Naive thymus-derived CD4-positive, alpha-beta T cell (primary cell): ENCODE measurements at regions of chr22 and their contacts with region 1.

Region 1: DNA sequence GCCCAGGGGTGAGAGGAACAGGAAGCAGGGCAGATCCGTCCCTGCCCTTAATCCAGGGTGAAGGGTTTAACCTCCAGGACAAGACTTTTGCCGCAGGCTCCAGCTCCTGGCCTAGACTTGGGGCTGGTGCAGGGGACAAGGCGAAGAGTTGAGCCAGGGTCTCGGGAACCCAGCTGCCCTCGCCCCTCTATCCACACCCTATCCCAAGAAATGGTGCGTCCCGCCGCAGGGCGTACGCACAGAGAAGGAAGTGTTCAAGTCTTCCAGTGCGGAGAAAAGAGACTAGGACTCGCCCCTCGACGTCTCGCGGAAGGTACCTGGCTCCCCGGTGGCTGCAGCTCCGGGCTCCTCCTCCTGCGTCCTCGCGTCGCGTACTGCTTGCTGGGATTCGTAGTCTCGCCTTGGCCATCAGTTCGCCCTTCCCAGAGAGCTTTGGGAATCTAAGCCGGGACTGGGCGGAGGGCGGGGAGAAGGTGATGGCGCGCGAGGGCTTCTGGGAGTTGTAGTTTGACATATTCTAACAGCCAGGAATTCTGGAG is at the start of gene ZMAT5:
- DNase-seq: peak; percentile 68 to 96 (median 93)
- ATAC-seq: peak; percentile 98
- H3K4me3 ChIP-seq: peak within 1 kb of the TSS; percentile 84
- H3K4me3 Mint-ChIP-seq: peak within 1 kb of the TSS; percentile 95 to 100 (median 99)
- H3K27ac ChIP-seq: peak within 1 kb of the TSS; percentile 88
- H3K27ac Mint-ChIP-seq: peak within 1 kb of the TSS; percentile 92 to 99 (median 97)
- H3K4me1 ChIP-seq: peaks cover 16 to 17% of the 10 kb centered on the region in 2 donors
- H3K4me1 Mint-ChIP-seq: peaks cover 21 to 59% (median 39%) of the 10 kb centered on the region in 7 donors
- H3K27me3 ChIP-seq: no peaks in the 10 kb centered on the region
- H3K27me3 Mint-ChIP-seq: no peaks in the 10 kb centered on the region
- total RNA-seq, gene ZMAT5: 12.9 to 26.4 (median 14.7) TPM

Region 2: GRCh38 chr22:27919222-27919941 is 1847.3 kb before region 1 on chr22 and contains the start of gene PITPNB:
- CTCF ChIA-PET with region 1: no interaction called
- POLR2A ChIA-PET with region 1: no interaction called
- intact Hi-C with region 1: loop called in 1 of 2 experiments (anchors 5 kb)
- DNase-seq: peak; percentile 97 to 100 (median 99)
- ATAC-seq: peak; percentile 95
- H3K4me3 ChIP-seq: peak within 1 kb of the TSS; percentile 84
- H3K4me3 Mint-ChIP-seq: peak within 1 kb of the TSS; percentile 97 to 100 (median 99)
- H3K27ac ChIP-seq: peak within 1 kb of the TSS; percentile 94
- H3K27ac Mint-ChIP-seq: peak within 1 kb of the TSS; percentile 93 to 99 (median 99)
- H3K4me1 ChIP-seq: peaks cover 29 to 32% of the 10 kb centered on the region in 2 donors
- H3K4me1 Mint-ChIP-seq: peaks cover 56 to 85% (median 75%) of the 10 kb centered on the region in 7 donors
- H3K27me3 ChIP-seq: no peaks in the 10 kb centered on the region
- H3K27me3 Mint-ChIP-seq: peaks cover 0 to 4% (median 0%) of the 10 kb centered on the region in 5 donors
- total RNA-seq, gene PITPNB: 56.3 to 98.8 (median 62.8) TPM

Region 3: DNA sequence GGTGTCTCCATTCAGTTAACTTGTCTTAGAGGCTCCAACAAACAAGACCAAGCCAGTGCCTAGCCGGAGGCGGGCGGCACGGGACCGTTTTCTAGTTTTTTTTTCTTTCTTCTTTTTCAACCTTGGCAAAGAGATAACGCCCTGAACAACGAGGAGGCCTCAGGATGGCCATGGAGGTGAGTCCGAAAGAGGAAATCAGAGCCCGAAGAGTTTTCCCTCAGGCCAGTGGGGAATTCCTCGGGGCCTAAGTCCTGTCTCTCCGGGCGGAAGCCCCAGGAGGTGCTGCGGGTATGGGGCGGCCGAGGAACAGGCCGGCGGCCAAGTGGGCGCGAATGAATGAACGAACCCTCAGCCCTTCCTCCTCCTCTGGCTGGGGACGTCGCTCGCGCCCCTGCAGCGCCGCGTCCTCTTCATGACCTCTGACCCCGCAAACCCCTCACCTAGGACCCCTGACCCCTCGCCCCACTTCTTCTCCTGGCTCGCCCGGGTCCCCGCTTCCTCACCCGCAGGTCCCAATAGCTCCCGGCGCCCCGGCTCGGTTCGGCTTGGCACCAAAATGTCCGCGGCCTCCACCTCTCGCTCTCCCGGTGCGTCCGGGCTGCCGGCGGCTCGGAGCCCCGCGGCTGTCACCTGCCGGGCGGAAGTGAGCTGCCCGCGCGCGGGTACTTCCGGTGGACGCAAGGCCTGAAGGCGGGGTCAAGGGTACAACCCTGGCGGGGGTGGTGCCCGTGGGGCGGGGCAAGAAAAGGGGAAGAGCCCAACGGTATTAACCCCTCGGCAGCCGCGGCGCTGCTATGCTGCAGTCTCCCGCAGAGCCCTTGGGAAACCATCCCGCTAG is 378.6 kb before region 1 on chr22 and contains the start of gene AP1B1:
- CTCF ChIA-PET with region 1: no interaction called
- POLR2A ChIA-PET with region 1: no interaction called
- intact Hi-C with region 1: loop called in 1 of 2 experiments (anchors 1 kb)
- DNase-seq: peak; percentile 79 to 96 (median 86)
- ATAC-seq: peak; percentile 98
- H3K4me3 ChIP-seq: peak within 1 kb of the TSS; percentile 87
- H3K4me3 Mint-ChIP-seq: peak within 1 kb of the TSS; percentile 91 to 96 (median 94)
- H3K27ac ChIP-seq: peak within 1 kb of the TSS; percentile 73
- H3K27ac Mint-ChIP-seq: peak within 1 kb of the TSS; percentile 87 to 97 (median 90)
- H3K4me1 ChIP-seq: peaks cover 7 to 13% of the 10 kb centered on the region in 2 donors
- H3K4me1 Mint-ChIP-seq: peaks cover 31 to 51% (median 48%) of the 10 kb centered on the region in 7 donors
- H3K27me3 ChIP-seq: no peaks in the 10 kb centered on the region
- H3K27me3 Mint-ChIP-seq: no peaks in the 10 kb centered on the region
- total RNA-seq, gene AP1B1: 38.5 to 77.7 (median 45.8) TPM

Region 4: GRCh38 chr22:29580200-29580810 is 186.4 kb before region 1 on chr22:
- CTCF ChIA-PET with region 1: no interaction called
- POLR2A ChIA-PET with region 1: no interaction called
- intact Hi-C with region 1: loop called in 1 of 2 experiments (anchors 1 kb)
- DNase-seq: peak in 1 of 9 donors; percentile 26
- ATAC-seq: no peak
- H3K4me3 ChIP-seq: peak overlapping the region; percentile 75
- H3K4me3 Mint-ChIP-seq: peak overlapping the region; percentile 88 to 96 (median 93)
- H3K27ac ChIP-seq: peak overlapping the region; percentile 69
- H3K27ac Mint-ChIP-seq: peak overlapping the region; percentile 78 to 95 (median 91)
- H3K4me1 ChIP-seq: peaks cover 0 to 10% of the 10 kb centered on the region in 2 donors
- H3K4me1 Mint-ChIP-seq: peaks cover 11 to 20% (median 16%) of the 10 kb centered on the region in 7 donors
- H3K27me3 ChIP-seq: no peaks in the 10 kb centered on the region
- H3K27me3 Mint-ChIP-seq: no peaks in the 10 kb centered on the region

Region 5: GRCh38 chr22:29883045-29883774 is 116.5 kb after region 1 on chr22 and contains the start of gene MTMR3:
- CTCF ChIA-PET with region 1: no interaction called
- POLR2A ChIA-PET with region 1: no interaction called
- intact Hi-C with region 1: loop called (anchors 1 kb)
- DNase-seq: peak; percentile 71 to 99 (median 82)
- ATAC-seq: peak; percentile 91
- H3K4me3 ChIP-seq: peak within 1 kb of the TSS; percentile 69
- H3K4me3 Mint-ChIP-seq: peak within 1 kb of the TSS in 7 of 10 donors; percentile 72 to 95 (median 92)
- H3K27ac ChIP-seq: peak within 1 kb of the TSS; percentile 93
- H3K27ac Mint-ChIP-seq: peak within 1 kb of the TSS; percentile 70 to 93 (median 84)
- H3K4me1 ChIP-seq: peaks cover 17 to 21% of the 10 kb centered on the region in 2 donors
- H3K4me1 Mint-ChIP-seq: peaks cover 0 to 12% (median 1%) of the 10 kb centered on the region in 7 donors
- H3K27me3 ChIP-seq: no peaks in the 10 kb centered on the region
- H3K27me3 Mint-ChIP-seq: peaks cover 0 to 3% (median 0%) of the 10 kb centered on the region in 5 donors
- total RNA-seq, gene MTMR3: 33.2 to 88.7 (median 64.6) TPM

Region 6: GRCh38 chr22:30289134-30289979 is 522.7 kb after region 1 on chr22 and contains the start of gene CASTOR1:
- CTCF ChIA-PET with region 1: no interaction called
- POLR2A ChIA-PET with region 1: no interaction called
- intact Hi-C with region 1: loop called in 1 of 2 experiments (anchors 2 kb)
- DNase-seq: peak; percentile 78 to 97 (median 84)
- ATAC-seq: peak; percentile 89
- H3K4me3 ChIP-seq: peak within 1 kb of the TSS; percentile 80
- H3K4me3 Mint-ChIP-seq: peak within 1 kb of the TSS; percentile 87 to 93 (median 90)
- H3K27ac ChIP-seq: peak within 1 kb of the TSS; percentile 75
- H3K27ac Mint-ChIP-seq: peak within 1 kb of the TSS; percentile 85 to 96 (median 92)
- H3K4me1 ChIP-seq: peaks cover 25 to 27% of the 10 kb centered on the region in 2 donors
- H3K4me1 Mint-ChIP-seq: peaks cover 12 to 55% (median 39%) of the 10 kb centered on the region in 7 donors
- H3K27me3 ChIP-seq: no peaks in the 10 kb centered on the region
- H3K27me3 Mint-ChIP-seq: no peaks in the 10 kb centered on the region
- total RNA-seq, gene CASTOR1: 12.4 to 21.3 (median 17.9) TPM

Region 7: DNA sequence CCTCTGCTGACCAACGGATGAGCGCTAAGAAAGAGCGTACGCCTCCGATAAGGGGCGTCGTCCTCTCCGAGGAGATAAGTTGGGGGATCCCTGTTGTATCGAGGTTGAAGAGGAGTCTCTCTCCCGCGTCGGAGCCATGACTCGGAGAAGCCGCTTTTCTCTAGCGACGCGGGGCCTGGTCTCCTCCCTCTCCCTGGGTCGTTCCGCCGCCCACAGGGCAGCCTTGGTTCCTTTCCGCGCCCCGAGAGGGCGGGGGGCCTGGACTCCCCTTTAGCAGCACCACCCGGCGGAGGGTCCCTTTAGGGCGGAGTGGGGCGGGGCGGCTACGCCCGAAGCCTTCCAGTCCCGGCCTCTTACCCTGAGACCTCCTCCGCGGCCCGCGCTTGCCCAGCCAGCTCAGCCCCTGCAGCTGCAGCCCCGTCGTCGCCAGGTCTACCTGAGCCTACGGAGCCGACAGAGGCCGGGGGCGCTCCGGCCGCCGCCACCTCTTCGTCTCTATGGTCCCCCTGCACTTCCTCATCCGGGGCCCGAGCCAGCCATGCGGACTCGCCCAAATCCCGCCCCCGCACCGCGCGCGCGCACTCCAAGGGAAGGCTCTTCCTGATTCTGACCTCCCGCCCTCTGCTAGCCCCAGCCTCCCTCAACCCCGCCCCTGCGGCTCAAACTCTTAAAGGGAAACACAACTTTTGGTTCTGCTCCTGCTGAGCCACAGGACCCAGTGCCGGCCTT is 1983.1 kb after region 1 on chr22 and contains the start of gene PRR14L:
- CTCF ChIA-PET with region 1: no interaction called
- POLR2A ChIA-PET with region 1: no interaction called
- intact Hi-C with region 1: loop called in 1 of 2 experiments (anchors 5 kb)
- DNase-seq: peak; percentile 94 to 100 (median 98)
- ATAC-seq: peak; percentile 86
- H3K4me3 ChIP-seq: peak within 1 kb of the TSS; percentile 92
- H3K4me3 Mint-ChIP-seq: peak within 1 kb of the TSS; percentile 87 to 97 (median 94)
- H3K27ac ChIP-seq: peak within 1 kb of the TSS; percentile 83
- H3K27ac Mint-ChIP-seq: peak within 1 kb of the TSS; percentile 82 to 98 (median 96)
- H3K4me1 ChIP-seq: peaks cover 31 to 37% of the 10 kb centered on the region in 2 donors
- H3K4me1 Mint-ChIP-seq: peaks cover 36 to 65% (median 59%) of the 10 kb centered on the region in 7 donors
- H3K27me3 ChIP-seq: no peaks in the 10 kb centered on the region
- H3K27me3 Mint-ChIP-seq: peaks cover 0 to 2% (median 0%) of the 10 kb centered on the region in 5 donors
- total RNA-seq, gene PRR14L: 43.1 to 82.6 (median 66.9) TPM